Panc1 (cell line): ENCODE measurements at regions of chr17 and their contacts with region 1.

Region 1: GRCh38 chr17:76121932-76122430 is 18.4 kb upstream of the EXOC7 start:
- DNase-seq: no peak
- ATAC-seq: no peak
- H3K4me3 ChIP-seq: no peak overlapping the region
- H3K27ac ChIP-seq: no peak overlapping the region
- H3K4me1 ChIP-seq: no peaks in the 10 kb centered on the region
- H3K27me3 ChIP-seq: no peaks in the 10 kb centered on the region
- CTCF ChIP-seq: no peak

Region 2: DNA sequence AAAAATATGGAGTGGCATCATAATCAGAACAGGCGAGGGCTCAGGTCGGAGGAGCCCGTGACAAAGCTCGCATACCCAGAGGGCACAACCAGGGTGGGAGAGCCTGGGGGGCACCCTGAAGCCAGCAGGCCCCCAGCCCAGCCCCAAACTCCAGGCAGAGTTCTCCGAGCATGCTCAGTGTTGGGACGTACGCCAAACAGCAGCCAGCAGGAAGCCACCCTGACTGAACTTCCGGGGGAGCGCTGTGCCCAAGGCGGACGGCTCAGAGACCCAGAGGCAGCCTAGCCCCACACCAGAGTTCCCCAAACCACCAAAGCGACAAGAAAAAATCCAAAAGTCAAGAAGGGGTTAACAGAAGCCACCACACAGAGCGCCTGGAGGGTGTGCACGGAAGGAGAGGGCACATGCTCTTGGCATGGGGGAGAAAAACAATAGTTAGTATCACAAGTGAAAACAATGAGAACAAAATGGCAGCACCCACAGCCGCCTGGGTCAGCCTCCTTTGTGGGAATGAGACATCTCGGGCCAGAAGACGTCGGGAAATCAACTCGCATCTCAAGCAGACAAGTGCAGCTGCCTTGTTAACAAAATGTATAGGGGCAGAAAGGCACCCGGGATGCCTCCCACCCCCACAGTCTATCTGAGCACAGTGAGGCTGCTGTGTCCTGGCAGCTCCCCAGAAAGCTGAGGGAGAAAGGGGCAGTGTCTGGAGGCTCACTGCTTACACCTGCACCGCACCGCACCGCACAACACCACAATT is 30.3 kb before region 1 on chr17:
- CTCF ChIA-PET with region 1: interaction called, 16 read pairs
- POLR2A ChIA-PET with region 1: interaction called, 4 read pairs
- in situ Hi-C with region 1: no loop called
- intact Hi-C with region 1: no loop called
- DNase-seq: no peak
- ATAC-seq: no peak
- H3K4me3 ChIP-seq: no peak overlapping the region
- H3K27ac ChIP-seq: no peak overlapping the region
- H3K4me1 ChIP-seq: no peaks in the 10 kb centered on the region
- H3K27me3 ChIP-seq: no peaks in the 10 kb centered on the region
- CTCF ChIP-seq: no peak

Region 3: GRCh38 chr17:76182016-76182764 is 60.2 kb after region 1 on chr17:
- CTCF ChIA-PET with region 1: interaction called, 32 read pairs
- POLR2A ChIA-PET with region 1: no interaction called
- in situ Hi-C with region 1: no loop called
- intact Hi-C with region 1: loop called (anchors 5 kb)
- DNase-seq: peak; percentile 89
- ATAC-seq: peak; percentile 98
- H3K4me3 ChIP-seq: no peak overlapping the region
- H3K27ac ChIP-seq: no peak overlapping the region
- H3K4me1 ChIP-seq: no peaks in the 10 kb centered on the region
- H3K27me3 ChIP-seq: no peaks in the 10 kb centered on the region
- CTCF ChIP-seq: peak; percentile 92

Region 4: GRCh38 chr17:76262732-76263344 is 140.9 kb after region 1 on chr17:
- CTCF ChIA-PET with region 1: interaction called, 12 read pairs
- POLR2A ChIA-PET with region 1: no interaction called
- in situ Hi-C with region 1: no loop called
- intact Hi-C with region 1: no loop called
- DNase-seq: no peak
- ATAC-seq: no peak
- H3K4me3 ChIP-seq: no peak overlapping the region
- H3K27ac ChIP-seq: peak overlapping the region; percentile 92
- H3K4me1 ChIP-seq: peaks cover 32% of the 10 kb centered on the region
- H3K27me3 ChIP-seq: no peaks in the 10 kb centered on the region
- CTCF ChIP-seq: no peak

Region 5: DNA sequence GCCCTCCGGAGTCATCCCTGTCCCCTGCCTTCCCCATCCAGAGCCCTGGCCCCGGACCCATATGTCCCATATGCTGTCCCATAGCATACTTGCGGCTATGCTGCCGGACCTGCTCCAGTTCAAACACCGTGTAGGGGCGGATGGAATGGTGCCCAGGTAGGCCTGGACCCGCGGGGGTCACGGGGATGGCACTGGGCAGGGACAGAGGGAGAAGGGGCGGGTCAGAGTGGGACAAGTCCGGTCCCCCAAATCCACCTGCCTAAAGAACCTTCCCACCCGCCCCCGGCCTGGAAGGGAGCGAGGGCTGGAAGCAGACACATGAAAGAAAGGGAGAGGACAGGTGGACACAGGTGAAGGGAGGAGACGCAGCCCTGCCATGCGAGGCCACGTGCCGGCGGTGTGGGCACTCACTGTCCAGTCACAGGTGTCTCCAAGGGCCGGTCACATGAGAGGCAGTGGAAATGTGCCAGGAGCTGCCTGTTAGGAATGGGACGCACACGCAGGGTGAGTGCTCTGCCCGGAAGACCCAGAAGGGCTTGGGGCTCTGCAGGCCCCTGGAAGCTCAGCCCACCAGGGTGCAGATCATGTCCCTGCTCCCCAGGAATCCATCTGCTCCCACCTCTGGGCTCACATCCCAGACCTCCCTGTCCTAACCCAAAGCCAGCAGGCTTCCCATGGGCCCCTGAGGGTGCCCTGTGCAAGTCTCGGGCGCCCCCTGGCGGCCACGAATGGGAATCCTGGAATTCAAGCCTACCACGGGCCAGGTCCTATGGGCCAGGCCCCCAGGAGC is 157.2 kb after region 1 on chr17:
- CTCF ChIA-PET with region 1: interaction called, 63 read pairs
- POLR2A ChIA-PET with region 1: no interaction called
- in situ Hi-C with region 1: no loop called
- intact Hi-C with region 1: loop called (anchors 2 kb)
- DNase-seq: no peak
- ATAC-seq: peak; percentile 94
- H3K4me3 ChIP-seq: no peak overlapping the region
- H3K27ac ChIP-seq: no peak overlapping the region
- H3K4me1 ChIP-seq: peaks cover 11% of the 10 kb centered on the region
- H3K27me3 ChIP-seq: no peaks in the 10 kb centered on the region
- CTCF ChIP-seq: peak; percentile 99

Region 6: DNA sequence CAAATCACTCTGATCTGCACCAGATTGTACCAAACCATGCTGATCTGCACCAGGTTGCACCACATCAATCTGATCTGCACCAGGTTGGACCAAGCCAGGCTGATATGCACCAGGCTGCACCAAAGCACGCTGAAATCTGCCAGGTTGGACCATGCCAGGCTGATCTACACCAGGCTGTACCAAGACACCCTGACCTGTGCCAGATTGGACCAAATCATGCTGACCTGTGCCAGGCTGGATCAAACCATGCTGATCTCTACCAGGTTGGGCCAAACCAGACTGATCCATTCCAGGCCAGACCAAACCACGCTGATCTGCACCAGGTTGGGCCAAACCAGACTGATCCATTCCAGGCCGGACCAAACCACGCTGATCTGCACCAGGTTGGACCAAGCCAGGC is 170.6 kb after region 1 on chr17:
- CTCF ChIA-PET with region 1: interaction called, 13 read pairs
- POLR2A ChIA-PET with region 1: no interaction called
- in situ Hi-C with region 1: no loop called
- intact Hi-C with region 1: no loop called
- DNase-seq: no peak
- ATAC-seq: no peak
- H3K4me3 ChIP-seq: no peak overlapping the region
- H3K27ac ChIP-seq: no peak overlapping the region
- H3K4me1 ChIP-seq: no peaks in the 10 kb centered on the region
- H3K27me3 ChIP-seq: no peaks in the 10 kb centered on the region
- CTCF ChIP-seq: no peak

Region 7: GRCh38 chr17:76337413-76337777 is 215.4 kb after region 1 on chr17:
- CTCF ChIA-PET with region 1: no interaction called
- POLR2A ChIA-PET with region 1: no interaction called
- in situ Hi-C with region 1: no loop called
- intact Hi-C with region 1: no loop called
- DNase-seq: no peak
- ATAC-seq: peak; percentile 90
- H3K4me3 ChIP-seq: no peak overlapping the region
- H3K27ac ChIP-seq: no peak overlapping the region
- H3K4me1 ChIP-seq: no peaks in the 10 kb centered on the region
- H3K27me3 ChIP-seq: no peaks in the 10 kb centered on the region
- CTCF ChIP-seq: no peak